Breast epithelium (tissue), 4 donors: ENCODE measurements at regions of chr5 and their contacts with region 1.

Region 1: DNA sequence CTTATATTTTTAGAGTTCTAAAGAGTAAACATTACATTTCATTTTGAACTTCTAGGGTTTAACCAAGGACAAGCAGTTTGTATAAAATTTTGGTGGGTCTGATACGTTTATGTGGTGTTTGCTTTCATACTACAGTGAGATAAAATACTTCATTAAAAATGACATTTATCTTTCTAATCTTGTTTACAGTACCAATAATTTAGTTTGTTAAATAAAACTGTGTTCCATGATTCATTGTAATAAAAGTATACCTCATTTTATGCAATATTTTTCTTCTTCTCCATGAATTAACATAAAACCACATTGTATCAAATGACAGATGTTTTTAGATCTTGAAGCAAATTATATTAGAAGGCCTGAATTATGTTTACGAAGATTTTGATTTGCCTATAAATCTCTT is 1443.1 kb upstream of the CDH6 start:
- DNase-seq: no peak
- H3K4me3 ChIP-seq: no peak overlapping the region
- H3K27ac ChIP-seq: no peak overlapping the region
- H3K4me1 ChIP-seq: no peaks in the 10 kb centered on the region
- H3K27me3 ChIP-seq: no peaks in the 10 kb centered on the region
- CTCF ChIP-seq: no peak
- POLR2A ChIP-seq: no peak

Region 2: DNA sequence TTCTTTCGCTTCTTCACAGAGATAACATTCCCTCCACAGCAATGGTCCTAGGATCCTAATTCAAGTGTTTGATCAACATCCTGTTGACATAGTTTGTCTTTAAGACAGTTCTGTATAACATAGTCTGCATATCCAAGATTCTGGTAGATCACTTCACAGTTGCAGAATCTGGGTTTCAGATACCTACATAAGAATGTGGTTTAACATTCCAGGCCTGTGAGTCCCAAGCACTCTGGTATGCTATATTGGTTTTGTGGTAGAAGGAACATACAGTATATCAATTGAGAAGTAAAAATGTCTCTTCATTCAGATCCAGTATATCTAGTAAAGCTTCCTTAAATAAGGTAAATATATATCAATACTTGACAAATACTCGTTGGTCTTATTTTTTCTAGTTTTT is 528.9 kb after region 1 on chr5:
- intact Hi-C with region 1: loop called (anchors 5 kb)
- DNase-seq: no peak
- H3K4me3 ChIP-seq: no peak overlapping the region
- H3K27ac ChIP-seq: no peak overlapping the region
- H3K4me1 ChIP-seq: no peaks in the 10 kb centered on the region
- H3K27me3 ChIP-seq: no peaks in the 10 kb centered on the region
- CTCF ChIP-seq: no peak
- POLR2A ChIP-seq: no peak